Heart right ventricle (tissue), 16 donors: ENCODE measurements at regions of chr17 and their contacts with region 1.

Region 1: DNA sequence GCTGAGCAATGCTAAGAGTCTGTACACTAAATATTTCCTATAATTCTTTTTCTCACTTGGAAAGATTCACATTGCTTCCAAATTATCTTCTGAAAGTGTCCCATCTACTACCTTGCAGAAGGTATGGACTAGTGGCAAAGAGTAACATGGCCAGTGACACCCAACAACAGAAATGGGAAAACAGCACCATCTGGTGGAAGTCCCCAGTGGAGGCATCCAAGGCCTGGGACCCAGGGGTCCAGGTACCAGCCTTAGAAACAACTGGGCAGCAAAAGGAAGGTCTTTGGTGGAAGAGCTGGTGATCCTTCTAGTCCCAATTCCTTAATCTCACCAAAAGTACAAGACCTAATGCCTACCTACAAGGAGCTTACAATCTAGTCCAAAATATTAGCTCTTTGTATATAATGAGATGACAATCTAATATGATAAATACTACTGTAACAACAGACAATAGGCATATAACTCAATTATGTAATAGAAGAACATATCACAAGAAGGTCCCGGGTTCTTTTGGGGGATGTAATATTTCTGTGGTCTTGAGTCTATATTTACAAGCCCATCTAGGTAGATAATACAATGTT is 55.3 kb downstream of the SKAP1 start:
- DNase-seq: no peak
- ATAC-seq: no peak
- H3K4me3 ChIP-seq: no peak overlapping the region
- H3K27ac ChIP-seq: no peak overlapping the region
- H3K4me1 ChIP-seq: no peaks in the 10 kb centered on the region
- H3K27me3 ChIP-seq: peaks cover 0 to 99% (median 77%) of the 10 kb centered on the region in 7 donors
- CTCF ChIP-seq: peak in 8 of 9 donors; percentile 26 to 64 (median 48)

Region 2: DNA sequence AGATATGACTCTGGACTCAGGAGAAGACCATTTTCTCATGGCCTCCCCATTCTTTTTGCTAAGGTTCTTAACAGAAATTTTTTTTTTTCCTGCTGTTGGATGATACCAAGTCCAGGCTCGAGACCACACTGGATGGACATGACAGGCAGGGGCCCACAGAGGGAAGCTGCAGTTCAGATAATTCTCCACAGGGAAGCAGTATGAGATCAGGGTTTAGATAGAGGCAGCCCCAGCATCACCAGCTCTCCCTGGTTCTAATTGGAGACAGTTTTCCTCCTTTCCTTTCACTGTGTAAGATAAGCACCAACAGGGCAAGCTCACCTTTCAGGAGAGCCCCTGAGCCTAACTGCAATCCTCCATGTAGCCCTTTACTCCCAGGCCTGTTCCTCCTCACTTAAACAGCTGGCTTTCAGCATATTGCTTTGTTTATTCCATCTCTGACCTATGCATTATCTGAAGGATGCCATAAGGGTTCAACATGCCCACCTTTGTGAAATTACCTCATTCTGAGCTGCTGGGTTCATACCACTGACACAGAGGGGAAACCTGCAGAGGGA is 159.1 kb before region 1 on chr17:
- intact Hi-C with region 1: loop called in 2 of 10 experiments (anchors 5 to 10 kb)
- DNase-seq: no peak
- ATAC-seq: no peak
- H3K4me3 ChIP-seq: no peak overlapping the region
- H3K27ac ChIP-seq: no peak overlapping the region
- H3K4me1 ChIP-seq: no peaks in the 10 kb centered on the region
- H3K27me3 ChIP-seq: peaks cover 0 to 80% (median 40%) of the 10 kb centered on the region in 7 donors
- CTCF ChIP-seq: peak in 7 of 9 donors; percentile 43 to 66 (median 49)

Region 3: DNA sequence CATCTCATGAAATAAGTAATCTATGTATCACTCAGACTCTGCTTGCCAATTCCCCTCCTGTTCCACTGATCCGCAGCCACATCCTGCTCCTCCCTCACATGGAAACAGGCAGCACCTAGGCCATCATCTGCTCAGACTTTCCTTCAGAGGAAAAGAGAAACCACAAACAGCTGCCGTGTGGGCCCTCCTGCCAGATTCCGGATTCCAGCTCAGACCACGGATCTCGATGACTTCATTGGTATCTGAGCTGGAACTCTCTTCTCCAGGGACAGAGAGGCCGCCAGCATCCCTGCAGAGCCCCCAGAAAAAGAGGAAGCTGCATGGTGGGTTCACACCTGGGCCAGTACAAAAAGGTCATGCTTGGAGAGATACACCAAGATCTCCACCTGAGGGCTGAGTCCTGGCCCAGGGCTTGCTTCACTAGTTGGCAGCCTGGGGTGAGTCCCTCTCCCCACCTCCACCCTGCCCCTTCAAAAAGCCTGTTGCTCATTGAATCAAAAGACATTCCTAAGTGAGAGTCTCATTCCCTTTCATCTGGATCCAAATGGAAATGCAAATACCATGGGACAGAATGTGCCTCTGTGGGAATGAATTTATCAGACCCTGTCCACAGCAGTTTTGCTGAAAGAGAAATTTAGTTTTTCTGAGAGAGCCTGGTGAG is 108.9 kb after region 1 on chr17:
- intact Hi-C with region 1: no loop called
- DNase-seq: no peak
- ATAC-seq: peak in 2 of 8 donors; percentile 42 to 68
- H3K4me3 ChIP-seq: no peak overlapping the region
- H3K27ac ChIP-seq: no peak overlapping the region
- H3K4me1 ChIP-seq: peaks cover 0 to 16% (median 0%) of the 10 kb centered on the region in 9 donors
- H3K27me3 ChIP-seq: peaks cover 0 to 89% (median 49%) of the 10 kb centered on the region in 7 donors
- CTCF ChIP-seq: no peak